B cell (primary cell): ENCODE measurements at regions of chr2 and their contacts with region 1.

Region 1: GRCh38 chr2:181305301-181306123 is 151.7 kb upstream of the ITGA4 start:
- DNase-seq: peak; percentile 74
- ATAC-seq: peak; percentile 50
- H3K4me3 ChIP-seq: peak overlapping the region in 2 of 5 experiments; percentile 10 to 68
- H3K4me3 Mint-ChIP-seq: peak overlapping the region; percentile 77
- H3K27ac ChIP-seq: peak overlapping the region; percentile 92 to 97
- H3K27ac Mint-ChIP-seq: peak overlapping the region; percentile 94
- H3K4me1 ChIP-seq: peaks cover 52 to 62% of the 10 kb centered on the region in 2 donors
- H3K4me1 Mint-ChIP-seq: peaks cover 65% of the 10 kb centered on the region
- H3K27me3 ChIP-seq: no peaks in the 10 kb centered on the region
- H3K27me3 Mint-ChIP-seq: no peaks in the 10 kb centered on the region
- CTCF ChIP-seq: no peak

Region 2: GRCh38 chr2:180980106-180980942 is 325.2 kb before region 1 on chr2 and contains the start of gene UBE2E3:
- CTCF ChIA-PET with region 1: no interaction called
- POLR2A ChIA-PET with region 1: no interaction called
- intact Hi-C with region 1: loop called (anchors 2 kb)
- DNase-seq: peak; percentile 91
- ATAC-seq: peak; percentile 76
- H3K4me3 ChIP-seq: peak within 1 kb of the TSS; percentile 62 to 88 (median 68)
- H3K4me3 Mint-ChIP-seq: peak within 1 kb of the TSS; percentile 96
- H3K27ac ChIP-seq: peak within 1 kb of the TSS; percentile 4 to 64
- H3K27ac Mint-ChIP-seq: peak within 1 kb of the TSS; percentile 94
- H3K4me1 ChIP-seq: peaks cover 24 to 25% of the 10 kb centered on the region in 2 donors
- H3K4me1 Mint-ChIP-seq: peaks cover 33% of the 10 kb centered on the region
- H3K27me3 ChIP-seq: no peaks in the 10 kb centered on the region
- H3K27me3 Mint-ChIP-seq: no peaks in the 10 kb centered on the region
- CTCF ChIP-seq: peak; percentile 63
- total RNA-seq, gene UBE2E3: 27.5 and 31.6 TPM in 2 replicates

Region 3: DNA sequence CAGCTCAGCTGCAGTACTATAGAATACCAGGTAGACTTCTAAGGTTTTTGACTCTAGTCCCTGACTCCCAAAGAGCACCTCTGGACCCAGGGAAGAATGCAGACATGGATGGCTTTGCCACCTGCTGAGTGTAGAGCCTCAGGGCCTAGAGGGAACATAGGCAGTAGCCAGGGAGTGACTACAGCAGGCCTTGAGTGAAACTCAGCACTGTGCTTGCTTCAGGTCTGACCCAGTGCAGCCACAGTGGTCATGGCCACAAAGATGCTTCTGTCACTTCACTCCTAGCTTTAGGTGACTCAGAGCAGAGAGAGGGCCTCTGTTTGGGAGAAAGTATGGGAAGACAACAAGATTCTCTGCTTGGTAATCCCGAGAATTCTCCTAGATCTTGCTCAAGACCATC is 10.5 kb before region 1 on chr2:
- CTCF ChIA-PET with region 1: interaction called, 11 read pairs
- POLR2A ChIA-PET with region 1: no interaction called
- intact Hi-C with region 1: no loop called
- DNase-seq: no peak
- ATAC-seq: no peak
- H3K4me3 ChIP-seq: no peak overlapping the region
- H3K4me3 Mint-ChIP-seq: no peak overlapping the region
- H3K27ac ChIP-seq: no peak overlapping the region
- H3K27ac Mint-ChIP-seq: no peak overlapping the region
- H3K4me1 ChIP-seq: no peaks in the 10 kb centered on the region
- H3K4me1 Mint-ChIP-seq: no peaks in the 10 kb centered on the region
- H3K27me3 ChIP-seq: no peaks in the 10 kb centered on the region
- H3K27me3 Mint-ChIP-seq: no peaks in the 10 kb centered on the region
- CTCF ChIP-seq: no peak

Region 4: GRCh38 chr2:181411105-181411849 is 105.8 kb after region 1 on chr2:
- CTCF ChIA-PET with region 1: interaction called, 11 read pairs
- POLR2A ChIA-PET with region 1: interaction called, 4 read pairs
- intact Hi-C with region 1: loop called (anchors 2 kb)
- DNase-seq: peak; percentile 86
- ATAC-seq: peak; percentile 97
- H3K4me3 ChIP-seq: peak overlapping the region in 2 of 5 experiments; percentile 6 to 46
- H3K4me3 Mint-ChIP-seq: peak overlapping the region; percentile 56
- H3K27ac ChIP-seq: peak overlapping the region; percentile 59
- H3K27ac Mint-ChIP-seq: peak overlapping the region; percentile 89
- H3K4me1 ChIP-seq: peaks cover 35 to 47% of the 10 kb centered on the region in 2 donors
- H3K4me1 Mint-ChIP-seq: peaks cover 81% of the 10 kb centered on the region
- H3K27me3 ChIP-seq: no peaks in the 10 kb centered on the region
- H3K27me3 Mint-ChIP-seq: no peaks in the 10 kb centered on the region
- CTCF ChIP-seq: no peak

Region 5: DNA sequence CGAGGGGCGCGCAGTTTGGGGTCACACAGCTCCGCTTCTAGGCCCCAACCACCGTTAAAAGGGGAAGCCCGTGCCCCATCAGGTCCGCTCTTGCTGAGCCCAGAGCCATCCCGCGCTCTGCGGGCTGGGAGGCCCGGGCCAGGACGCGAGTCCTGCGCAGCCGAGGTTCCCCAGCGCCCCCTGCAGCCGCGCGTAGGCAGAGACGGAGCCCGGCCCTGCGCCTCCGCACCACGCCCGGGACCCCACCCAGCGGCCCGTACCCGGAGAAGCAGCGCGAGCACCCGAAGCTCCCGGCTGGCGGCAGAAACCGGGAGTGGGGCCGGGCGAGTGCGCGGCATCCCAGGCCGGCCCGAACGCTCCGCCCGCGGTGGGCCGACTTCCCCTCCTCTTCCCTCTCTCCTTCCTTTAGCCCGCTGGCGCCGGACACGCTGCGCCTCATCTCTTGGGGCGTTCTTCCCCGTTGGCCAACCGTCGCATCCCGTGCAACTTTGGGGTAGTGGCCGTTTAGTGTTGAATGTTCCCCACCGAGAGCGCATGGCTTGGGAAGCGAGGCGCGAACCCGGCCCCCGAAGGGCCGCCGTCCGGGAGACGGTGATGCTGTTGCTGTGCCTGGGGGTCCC is 151.7 kb after region 1 on chr2 and contains the start of gene ITGA4:
- CTCF ChIA-PET with region 1: interaction called, 252 read pairs
- POLR2A ChIA-PET with region 1: interaction called, 24 read pairs
- intact Hi-C with region 1: loop called (anchors 1 kb)
- DNase-seq: no peak
- ATAC-seq: peak; percentile 79
- H3K4me3 ChIP-seq: peak within 1 kb of the TSS; percentile 90 to 97 (median 93)
- H3K4me3 Mint-ChIP-seq: peak within 1 kb of the TSS; percentile 90
- H3K27ac ChIP-seq: peak within 1 kb of the TSS; percentile 95 to 100
- H3K27ac Mint-ChIP-seq: peak within 1 kb of the TSS; percentile 99
- H3K4me1 ChIP-seq: peaks cover 33 to 38% of the 10 kb centered on the region in 2 donors
- H3K4me1 Mint-ChIP-seq: peaks cover 59% of the 10 kb centered on the region
- H3K27me3 ChIP-seq: no peaks in the 10 kb centered on the region
- H3K27me3 Mint-ChIP-seq: no peaks in the 10 kb centered on the region
- CTCF ChIP-seq: peak; percentile 81
- total RNA-seq, gene ITGA4: 169 and 174 TPM in 2 replicates

Region 6: GRCh38 chr2:181891966-181892798 is 586.7 kb after region 1 on chr2:
- CTCF ChIA-PET with region 1: no interaction called
- POLR2A ChIA-PET with region 1: no interaction called
- intact Hi-C with region 1: loop called (anchors 10 kb)
- DNase-seq: peak; percentile 80
- ATAC-seq: peak; percentile 52
- H3K4me3 ChIP-seq: peak overlapping the region; percentile 76 to 92 (median 88)
- H3K4me3 Mint-ChIP-seq: peak overlapping the region; percentile 94
- H3K27ac ChIP-seq: peak overlapping the region; percentile 48 to 70
- H3K27ac Mint-ChIP-seq: peak overlapping the region; percentile 81
- H3K4me1 ChIP-seq: peaks cover 4 to 14% of the 10 kb centered on the region in 2 donors
- H3K4me1 Mint-ChIP-seq: peaks cover 31% of the 10 kb centered on the region
- H3K27me3 ChIP-seq: peaks cover 0 to 12% (median 2%) of the 10 kb centered on the region in 4 experiments
- H3K27me3 Mint-ChIP-seq: peaks cover 13% of the 10 kb centered on the region
- CTCF ChIP-seq: peak; percentile 48